Heart left ventricle (tissue), 16 donors: ENCODE measurements at regions of chr2 and their contacts with region 1.

Region 1: GRCh38 chr2:233758849-233759248 is 1.2 kb upstream of the UGT1A1 start:
- DNase-seq: no peak
- ATAC-seq: no peak
- H3K4me3 ChIP-seq: no peak overlapping the region
- H3K27ac ChIP-seq: no peak overlapping the region
- H3K4me1 ChIP-seq: no peaks in the 10 kb centered on the region
- H3K27me3 ChIP-seq: peaks cover 0 to 8% (median 0%) of the 10 kb centered on the region in 9 donors
- CTCF ChIP-seq: no peak
- POLR2A ChIP-seq: no peak

Region 2: GRCh38 chr2:233746475-233747282 is 12.2 kb before region 1 on chr2:
- intact Hi-C with region 1: loop called in 1 of 10 experiments (anchors 1 kb)
- DNase-seq: no peak
- ATAC-seq: no peak
- H3K4me3 ChIP-seq: no peak overlapping the region
- H3K27ac ChIP-seq: no peak overlapping the region
- H3K4me1 ChIP-seq: no peaks in the 10 kb centered on the region
- H3K27me3 ChIP-seq: peaks cover 0 to 6% (median 0%) of the 10 kb centered on the region in 9 donors
- CTCF ChIP-seq: no peak
- POLR2A ChIP-seq: no peak